Breast epithelium (tissue), 4 donors: ENCODE measurements at regions of chr5 and their contacts with region 1.

Region 1: DNA sequence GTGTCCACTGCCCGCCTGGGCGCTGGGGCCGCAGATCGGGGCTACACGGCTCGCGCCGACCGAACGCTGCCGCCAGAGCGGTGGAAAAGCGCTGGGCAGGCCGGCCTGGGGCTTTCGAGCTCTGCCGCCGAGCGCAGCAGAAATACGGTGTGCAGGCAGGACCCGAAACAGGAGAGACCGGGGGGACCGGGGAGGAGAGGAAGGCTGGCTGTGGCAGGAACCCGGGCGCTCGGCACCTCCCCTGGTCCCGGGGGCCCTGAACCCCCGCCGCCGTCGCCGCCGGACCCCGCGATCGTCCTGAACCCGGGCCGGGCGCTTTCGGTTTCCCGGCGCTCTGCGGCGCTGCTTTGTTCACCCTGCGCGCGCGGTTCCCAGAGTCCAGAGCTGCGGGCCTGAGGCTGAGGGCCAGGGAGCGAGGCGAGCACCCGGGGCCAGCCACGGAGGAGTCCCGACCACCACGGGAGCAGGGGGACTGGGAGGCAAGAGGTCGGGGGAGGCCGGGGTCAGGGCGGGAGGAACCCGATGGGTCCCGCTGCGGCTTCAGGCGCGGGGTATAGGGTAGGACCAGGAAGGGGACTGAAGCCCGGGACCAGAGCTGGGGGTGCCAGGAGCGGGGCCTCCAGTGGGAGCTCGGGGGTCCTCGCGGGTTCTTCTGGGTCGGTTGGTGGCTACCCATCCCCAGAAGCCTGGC is 12.0 kb downstream of the IRX2 start:
- DNase-seq: peak in 1 of 2 donors; percentile 36
- H3K4me3 ChIP-seq: peak overlapping the region; percentile 60 to 80 (median 75)
- H3K27ac ChIP-seq: peak overlapping the region; percentile 93 to 95
- H3K4me1 ChIP-seq: no peaks in the 10 kb centered on the region
- H3K27me3 ChIP-seq: no peaks in the 10 kb centered on the region
- CTCF ChIP-seq: no peak
- POLR2A ChIP-seq: no peak

Region 2: DNA sequence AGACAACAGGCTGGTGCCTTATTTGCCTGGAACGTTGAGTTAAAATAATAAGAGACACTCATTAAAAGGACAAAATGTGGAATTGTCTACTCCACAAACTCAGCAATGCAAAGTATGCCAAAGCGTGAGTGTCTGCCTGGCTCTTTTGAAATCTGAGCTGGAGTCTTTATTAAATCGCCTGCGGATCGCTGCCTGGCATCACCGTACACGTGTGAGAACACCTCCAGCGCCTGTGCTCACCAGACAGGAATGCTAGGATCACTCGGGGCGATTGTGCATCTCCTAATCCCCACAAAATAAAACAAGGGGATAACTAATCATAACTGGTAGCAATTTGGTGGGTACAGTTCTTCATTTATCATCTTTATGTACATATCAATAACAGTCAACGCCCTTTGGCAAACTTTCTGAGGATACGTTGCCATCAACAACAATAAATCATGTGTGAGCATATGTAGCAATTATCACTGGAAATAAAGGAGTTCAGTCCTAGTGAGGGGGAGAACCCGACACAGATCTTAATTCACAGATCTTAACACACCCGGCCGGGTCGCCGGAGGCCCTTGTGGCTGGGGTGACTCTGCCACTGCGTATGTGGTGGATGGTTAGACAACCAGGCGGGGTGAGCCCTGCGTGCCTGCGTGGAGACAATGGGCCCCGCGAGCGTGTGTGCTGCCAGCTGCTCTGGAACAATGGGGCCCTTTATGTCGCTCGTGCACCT is 571.2 kb after region 1 on chr5:
- intact Hi-C with region 1: loop called (anchors 10 kb)
- DNase-seq: peak; percentile 85 to 97
- H3K4me3 ChIP-seq: peak overlapping the region in 1 of 3 donors; percentile 40
- H3K27ac ChIP-seq: peak overlapping the region; percentile 95 to 96
- H3K4me1 ChIP-seq: no peaks in the 10 kb centered on the region
- H3K27me3 ChIP-seq: no peaks in the 10 kb centered on the region
- CTCF ChIP-seq: no peak
- POLR2A ChIP-seq: no peak